ENCODE measurements at regions of chr12 and their contacts with region 1.

Region 1: GRCh38 chr12:6335451-6336078 is 6.3 kb downstream of the TNFRSF1A start:
- DNase-seq: peak; percentile 92
- ATAC-seq: peak; percentile 50
- H3K4me3 ChIP-seq: no peak overlapping the region
- H3K27ac ChIP-seq: peak overlapping the region; percentile 40 to 95
- H3K4me1 ChIP-seq: no peaks in the 10 kb centered on the region
- H3K27me3 ChIP-seq: no peaks in the 10 kb centered on the region

Region 2: GRCh38 chr12:6383572-6384498 is 48.3 kb after region 1 on chr12 and contains the start of gene LTBR:
- intact Hi-C with region 1: loop called (anchors 2 to 5 kb)
- DNase-seq: peak; percentile 98 to 99
- ATAC-seq: peak; percentile 98
- H3K4me3 ChIP-seq: peak within 1 kb of the TSS; percentile 36 to 48
- H3K27ac ChIP-seq: peak within 1 kb of the TSS; percentile 65 to 88
- H3K4me1 ChIP-seq: no peaks in the 10 kb centered on the region
- H3K27me3 ChIP-seq: no peaks in the 10 kb centered on the region
- total RNA-seq, gene LTBR: 83.1 to 103 TPM

Region 3: GRCh38 chr12:6470375-6471163 is 135.0 kb after region 1 on chr12 and contains the start of gene VAMP1:
- intact Hi-C with region 1: loop called in 1 of 2 experiments (anchors 1 kb)
- DNase-seq: peak; percentile 99
- ATAC-seq: peak; percentile 99
- H3K4me3 ChIP-seq: peak within 1 kb of the TSS; percentile 32 to 47
- H3K27ac ChIP-seq: peak within 1 kb of the TSS in 1 of 2 donors; percentile 83
- H3K4me1 ChIP-seq: peaks cover 2 to 3% of the 10 kb centered on the region in 2 donors
- H3K27me3 ChIP-seq: no peaks in the 10 kb centered on the region
- total RNA-seq, gene VAMP1: 9.7 to 23.9 TPM

Region 4: GRCh38 chr12:6554168-6555017 is 218.8 kb after region 1 on chr12:
- intact Hi-C with region 1: loop called in 1 of 2 experiments (anchors 5 kb)
- DNase-seq: peak; percentile 86 to 92
- ATAC-seq: peak; percentile 70
- H3K4me3 ChIP-seq: peak overlapping the region; percentile 63 to 78
- H3K27ac ChIP-seq: peak overlapping the region in 1 of 2 donors; percentile 50
- H3K4me1 ChIP-seq: peaks cover 0 to 3% of the 10 kb centered on the region in 2 donors
- H3K27me3 ChIP-seq: no peaks in the 10 kb centered on the region

Region 5: GRCh38 chr12:6592087-6592486 is 256.5 kb after region 1 on chr12:
- intact Hi-C with region 1: no loop called
- DNase-seq: peak in 1 of 2 donors; percentile 21
- ATAC-seq: no peak
- H3K4me3 ChIP-seq: no peak overlapping the region
- H3K27ac ChIP-seq: no peak overlapping the region
- H3K4me1 ChIP-seq: no peaks in the 10 kb centered on the region
- H3K27me3 ChIP-seq: no peaks in the 10 kb centered on the region